ENCODE measurements at regions of chr7 and their contacts with region 1.

Region 1: GRCh38 chr7:154832557-154833138 is 170.3 kb downstream of the PAXIP1 start:
- DNase-seq: peak in 5 of 10 donors; percentile 51 to 70 (median 62)
- H3K4me3 ChIP-seq: no peak overlapping the region
- H3K27ac ChIP-seq: peak overlapping the region in 8 of 59 donors; percentile 28 to 68 (median 52)
- H3K27me3 ChIP-seq: no peaks in the 10 kb centered on the region
- CTCF ChIP-seq: peak in 52 of 56 donors; percentile 24 to 72 (median 51)

Region 2: DNA sequence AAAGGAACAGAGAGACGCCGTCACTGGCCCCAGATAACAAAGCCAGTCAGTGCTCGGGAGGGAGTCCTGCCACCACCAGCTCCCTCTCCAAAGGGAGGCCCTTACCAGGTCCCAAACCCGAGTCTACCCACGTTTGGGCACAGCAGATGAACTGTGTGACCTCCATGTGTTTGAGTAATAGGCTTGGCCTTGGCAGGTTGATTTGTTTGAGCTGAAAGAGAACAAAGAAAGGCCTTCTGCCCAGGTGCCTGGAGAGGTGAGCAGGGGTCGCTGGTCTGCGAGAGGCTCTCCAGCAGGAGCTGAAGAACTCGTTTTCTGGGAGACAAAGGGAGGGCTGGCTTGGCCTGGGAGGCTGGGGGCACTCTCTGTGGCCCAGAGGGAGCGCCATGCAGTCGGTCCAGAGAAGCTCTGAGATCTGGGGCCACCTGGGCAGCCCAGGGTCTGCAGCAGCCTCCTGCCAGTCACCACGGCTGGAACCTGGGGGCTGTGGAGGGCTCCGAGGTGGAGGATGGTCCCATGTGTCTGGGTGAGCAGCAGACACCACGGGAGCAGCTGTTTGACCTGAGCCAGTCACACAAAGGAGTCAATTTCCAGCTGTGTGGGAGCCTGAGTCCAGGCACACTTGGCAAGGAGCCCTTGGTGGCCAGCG is 70.6 kb after region 1 on chr7:
- intact Hi-C with region 1: loop called in 1 of 2 experiments (anchors 5 kb)
- DNase-seq: peak in 2 of 10 donors; percentile 32 to 41
- H3K4me3 ChIP-seq: peak overlapping the region in 2 of 59 donors; percentile 23 to 29
- H3K27ac ChIP-seq: peak overlapping the region in 58 of 59 donors; percentile 9 to 91 (median 82)
- H3K27me3 ChIP-seq: no peaks in the 10 kb centered on the region
- CTCF ChIP-seq: no peak

Region 3: DNA sequence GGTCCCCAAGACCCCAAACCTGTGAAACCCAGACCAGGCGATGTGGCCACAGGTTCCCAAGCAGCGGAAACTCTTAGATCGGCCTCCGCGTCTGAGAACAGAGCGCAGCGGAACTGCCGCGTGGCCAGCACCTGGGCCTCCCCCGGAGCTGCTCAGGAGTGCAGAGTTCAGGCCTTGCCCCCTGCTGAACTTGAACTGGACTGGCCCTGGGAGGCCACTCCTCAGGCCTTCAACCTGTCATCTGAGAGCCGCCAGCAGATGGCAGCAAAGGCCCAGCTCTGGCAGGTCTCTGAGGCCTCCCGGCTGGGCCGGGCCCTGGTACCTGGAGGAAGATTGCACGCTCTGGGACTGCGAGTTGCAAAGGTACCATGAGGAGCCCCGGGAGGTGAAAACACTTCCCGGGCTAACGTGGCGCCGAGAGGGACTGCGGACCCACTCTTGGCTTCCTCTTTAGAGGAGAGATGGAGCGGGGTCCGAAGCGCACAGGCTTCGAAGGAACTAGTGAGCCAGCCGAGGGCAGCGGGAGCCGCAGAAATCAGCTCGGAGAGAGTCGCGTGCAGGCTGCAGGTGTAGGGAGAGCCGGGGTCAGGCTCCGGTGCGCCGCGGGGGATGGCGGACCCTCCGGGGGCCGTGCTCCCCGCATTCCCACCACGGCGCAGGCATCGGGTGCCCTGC is 81.1 kb after region 1 on chr7:
- intact Hi-C with region 1: loop called in 1 of 2 experiments (anchors 5 kb)
- DNase-seq: peak; percentile 86 to 93 (median 90)
- H3K4me3 ChIP-seq: peak overlapping the region in 49 of 59 donors; percentile 7 to 62 (median 40)
- H3K27ac ChIP-seq: peak overlapping the region in 51 of 59 donors; percentile 6 to 86 (median 68)
- H3K27me3 ChIP-seq: peaks cover 0 to 7% (median 0%) of the 10 kb centered on the region in 45 donors
- CTCF ChIP-seq: peak; percentile 81 to 98 (median 94)

Region 4: GRCh38 chr7:155003376-155004214 is 170.9 kb after region 1 on chr7:
- intact Hi-C with region 1: loop called in 1 of 2 experiments (anchors 10 kb)
- DNase-seq: peak; percentile 42 to 92 (median 66)
- H3K4me3 ChIP-seq: peak overlapping the region; percentile 55 to 100 (median 96)
- H3K27ac ChIP-seq: peak overlapping the region in 58 of 59 donors; percentile 68 to 99 (median 94)
- H3K27me3 ChIP-seq: no peaks in the 10 kb centered on the region
- CTCF ChIP-seq: peak in 24 of 56 donors; percentile 5 to 46 (median 18)

Region 5: DNA sequence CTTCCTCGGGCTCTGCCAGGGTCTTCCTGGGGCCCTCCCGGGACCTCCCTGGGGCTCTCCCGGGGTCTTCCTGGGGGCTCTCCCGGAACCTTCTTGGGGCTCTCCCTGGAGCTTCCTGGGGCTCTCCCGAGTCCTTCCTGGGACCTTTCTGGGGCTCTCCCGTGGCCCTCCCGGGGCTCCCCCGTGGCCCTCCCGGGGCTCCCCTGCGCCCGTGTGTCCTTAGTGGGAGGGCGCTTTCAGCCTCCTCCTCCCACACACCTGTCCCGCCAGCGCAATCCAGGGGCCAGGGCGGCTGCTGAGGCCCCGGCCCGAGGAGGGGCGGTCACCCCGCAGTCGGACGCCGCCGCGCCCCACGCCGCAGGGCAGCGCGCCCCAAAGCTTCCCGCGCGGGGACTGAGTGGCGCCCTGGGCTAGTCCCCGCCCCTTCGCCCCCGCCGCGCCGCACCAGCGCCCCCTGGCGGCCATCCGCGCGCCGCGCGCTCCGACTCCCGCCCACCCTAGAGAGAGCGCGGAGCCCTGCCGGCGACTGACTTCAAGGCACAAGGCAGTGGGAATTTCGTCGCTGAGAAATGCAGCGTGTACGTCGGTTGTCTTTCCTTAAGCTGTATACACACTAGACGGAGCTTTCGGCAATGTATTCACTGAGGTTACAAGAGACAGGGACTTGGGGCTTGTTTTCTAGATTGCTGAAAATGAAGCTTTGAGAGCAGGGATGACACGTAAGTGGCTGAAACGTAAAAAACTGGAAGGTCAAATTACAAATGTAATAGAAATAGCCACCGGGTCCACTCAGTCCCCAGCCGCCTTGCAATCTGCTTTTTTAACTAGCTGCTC is 512.2 kb after region 1 on chr7:
- intact Hi-C with region 1: loop called in 1 of 2 experiments (anchors 5 kb)
- DNase-seq: peak; percentile 60 to 90 (median 70)
- H3K4me3 ChIP-seq: peak overlapping the region in 57 of 59 donors; percentile 26 to 66 (median 49)
- H3K27ac ChIP-seq: no peak overlapping the region
- H3K27me3 ChIP-seq: peaks cover 0 to 18% (median 10%) of the 10 kb centered on the region in 45 donors
- CTCF ChIP-seq: peak; percentile 45 to 99 (median 85)